ENCODE measurements at regions of chrX and their contacts with region 1.

Region 1: GRCh38 chrX:27964432-27964831 is 16.8 kb downstream of the DCAF8L1 start:
- DNase-seq: no peak
- ATAC-seq: no peak
- H3K4me3 ChIP-seq: no peak overlapping the region
- H3K27ac ChIP-seq: no peak overlapping the region
- H3K4me1 ChIP-seq: no peaks in the 10 kb centered on the region
- H3K27me3 ChIP-seq: no peaks in the 10 kb centered on the region
- CTCF ChIP-seq: no peak
- EP300 ChIP-seq: no peak
- POLR2A ChIP-seq: no peak
- RAD21 ChIP-seq: no peak

Region 2: GRCh38 chrX:27775984-27776383 is 188.4 kb before region 1 on chrX:
- CTCF ChIA-PET with region 1: no interaction called
- POLR2A ChIA-PET with region 1: no interaction called
- in situ Hi-C with region 1: no loop called
- intact Hi-C with region 1: loop called (anchors 5 kb)
- DNase-seq: no peak
- ATAC-seq: no peak
- H3K4me3 ChIP-seq: no peak overlapping the region
- H3K27ac ChIP-seq: no peak overlapping the region
- H3K4me1 ChIP-seq: no peaks in the 10 kb centered on the region
- H3K27me3 ChIP-seq: no peaks in the 10 kb centered on the region
- CTCF ChIP-seq: no peak
- EP300 ChIP-seq: no peak
- POLR2A ChIP-seq: no peak
- RAD21 ChIP-seq: no peak

Region 3: GRCh38 chrX:27981349-27981748 is 16.9 kb after region 1 on chrX and contains the start of gene DCAF8L1:
- CTCF ChIA-PET with region 1: no interaction called
- POLR2A ChIA-PET with region 1: no interaction called
- in situ Hi-C with region 1: no loop called
- intact Hi-C with region 1: no loop called
- DNase-seq: no peak
- ATAC-seq: no peak
- H3K4me3 ChIP-seq: no peak within 1 kb of the TSS
- H3K27ac ChIP-seq: no peak within 1 kb of the TSS
- H3K4me1 ChIP-seq: no peaks in the 10 kb centered on the region
- H3K27me3 ChIP-seq: no peaks in the 10 kb centered on the region
- CTCF ChIP-seq: no peak
- EP300 ChIP-seq: no peak
- POLR2A ChIP-seq: no peak
- RAD21 ChIP-seq: no peak
- polyA plus RNA-seq, gene DCAF8L1: 0.03 TPM in 1 of 2 experiments, not detected in the other